Gastrocnemius medialis (tissue), 4 donors: ENCODE measurements at regions of chr16 and their contacts with region 1.

Region 1: GRCh38 chr16:66247516-66248481 is 118.7 kb upstream of the CDH5 start:
- DNase-seq: peak; percentile 48 to 74
- ATAC-seq: peak; percentile 60 to 68
- H3K4me3 ChIP-seq: no peak overlapping the region
- H3K27ac ChIP-seq: peak overlapping the region; percentile 4 to 51 (median 44)
- H3K4me1 ChIP-seq: peaks cover 8 to 9% of the 10 kb centered on the region in 2 donors
- H3K27me3 ChIP-seq: no peaks in the 10 kb centered on the region
- CTCF ChIP-seq: no peak
- POLR2A ChIP-seq: no peak

Region 2: GRCh38 chr16:66205287-66206231 is 42.2 kb before region 1 on chr16:
- in situ Hi-C with region 1: no loop called
- intact Hi-C with region 1: loop called (anchors 5 kb)
- DNase-seq: no peak
- ATAC-seq: no peak
- H3K4me3 ChIP-seq: no peak overlapping the region
- H3K27ac ChIP-seq: peak overlapping the region in 2 of 4 donors; percentile 9 to 47
- H3K4me1 ChIP-seq: no peaks in the 10 kb centered on the region
- H3K27me3 ChIP-seq: no peaks in the 10 kb centered on the region
- CTCF ChIP-seq: no peak
- POLR2A ChIP-seq: no peak